Caco-2 (cell line): ENCODE measurements at regions of chr7 and their contacts with region 1.

Region 1: DNA sequence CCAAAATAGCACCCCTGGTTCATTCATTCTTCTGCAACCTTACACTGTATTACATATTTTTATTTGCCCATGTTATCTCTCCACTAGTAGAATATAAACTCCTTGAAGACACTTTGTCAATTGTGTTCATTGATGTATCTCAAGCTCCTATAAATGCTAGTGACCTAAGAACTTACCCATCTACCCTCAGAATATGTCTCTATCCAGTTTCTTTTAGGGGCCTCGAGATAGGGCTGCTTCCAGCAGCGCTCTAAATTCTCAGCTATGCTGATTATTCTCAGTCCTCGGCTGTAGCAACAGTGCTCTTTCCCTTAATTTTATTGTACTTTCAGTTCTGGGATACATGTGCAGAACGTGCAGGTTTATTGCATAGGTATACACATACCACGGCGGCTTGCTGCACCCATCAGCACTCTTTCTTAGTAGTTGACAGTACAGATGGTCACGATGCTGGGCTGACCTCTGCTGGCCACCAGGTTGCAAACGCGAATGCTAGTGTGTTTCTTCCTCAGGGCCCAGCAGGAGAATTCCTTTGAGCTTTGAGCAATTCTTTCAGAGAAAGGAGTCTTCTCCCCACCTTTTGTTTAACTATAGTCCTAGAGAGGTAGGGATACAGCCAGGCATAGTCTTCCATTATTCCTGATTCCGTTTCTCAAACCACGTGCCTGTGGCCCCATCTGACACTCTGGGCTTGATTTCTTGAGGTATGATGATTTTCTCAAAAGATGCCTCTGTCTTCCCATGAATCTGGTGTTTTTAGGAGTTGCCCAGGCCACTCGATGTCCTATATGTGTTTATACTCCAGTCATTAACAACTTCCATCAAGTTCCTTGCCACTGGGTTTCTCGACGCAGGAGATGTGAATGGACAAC is 49.1 kb upstream of the CDC14C start:
- DNase-seq: peak; percentile 59 to 66
- H3K4me3 ChIP-seq: no peak overlapping the region
- H3K4me3 Mint-ChIP-seq: no peak overlapping the region
- H3K27ac Mint-ChIP-seq: no peak overlapping the region
- H3K4me1 ChIP-seq: no peaks in the 10 kb centered on the region
- H3K4me1 Mint-ChIP-seq: no peaks in the 10 kb centered on the region
- H3K27me3 ChIP-seq: no peaks in the 10 kb centered on the region
- H3K27me3 Mint-ChIP-seq: peaks cover 4% of the 10 kb centered on the region
- CTCF ChIP-seq: peak; percentile 67 to 84

Region 2: DNA sequence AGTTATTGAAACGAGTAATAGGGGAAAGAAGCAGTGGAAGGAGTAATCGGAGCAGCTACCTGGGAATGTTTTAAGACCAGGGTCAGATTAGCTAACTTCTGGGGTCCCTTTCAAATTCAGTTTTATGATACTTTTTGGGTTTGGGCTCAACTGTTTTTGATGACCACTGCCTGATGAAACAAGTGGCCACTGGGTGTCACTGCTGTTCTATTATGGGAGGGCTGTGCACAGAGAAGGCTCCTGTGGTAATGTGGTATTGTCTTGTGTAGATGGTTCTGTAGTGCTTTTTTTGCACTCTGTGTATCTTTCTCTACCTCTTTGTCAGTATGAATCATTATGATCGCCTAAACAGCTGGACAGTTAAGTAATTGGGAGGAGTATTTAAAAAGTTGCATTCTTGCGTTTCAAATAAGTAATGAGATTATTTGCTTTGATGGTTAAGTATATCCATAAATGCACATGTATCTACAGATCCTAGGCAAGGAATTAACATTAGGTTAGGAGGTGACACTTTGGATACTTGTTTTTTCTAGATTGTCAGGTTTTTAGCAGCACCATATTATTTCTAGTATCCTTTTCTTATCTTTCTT is 575.6 kb before region 1 on chr7:
- CTCF ChIA-PET with region 1: no interaction called
- POLR2A ChIA-PET with region 1: no interaction called
- intact Hi-C with region 1: loop called (anchors 1 kb)
- DNase-seq: peak; percentile 50 to 68
- H3K4me3 ChIP-seq: no peak overlapping the region
- H3K4me3 Mint-ChIP-seq: no peak overlapping the region
- H3K27ac Mint-ChIP-seq: no peak overlapping the region
- H3K4me1 ChIP-seq: no peaks in the 10 kb centered on the region
- H3K4me1 Mint-ChIP-seq: no peaks in the 10 kb centered on the region
- H3K27me3 ChIP-seq: no peaks in the 10 kb centered on the region; the same call in 1 of the 2 replicates
- H3K27me3 Mint-ChIP-seq: peaks cover 12% of the 10 kb centered on the region
- CTCF ChIP-seq: peak; percentile 57 to 80

Region 3: DNA sequence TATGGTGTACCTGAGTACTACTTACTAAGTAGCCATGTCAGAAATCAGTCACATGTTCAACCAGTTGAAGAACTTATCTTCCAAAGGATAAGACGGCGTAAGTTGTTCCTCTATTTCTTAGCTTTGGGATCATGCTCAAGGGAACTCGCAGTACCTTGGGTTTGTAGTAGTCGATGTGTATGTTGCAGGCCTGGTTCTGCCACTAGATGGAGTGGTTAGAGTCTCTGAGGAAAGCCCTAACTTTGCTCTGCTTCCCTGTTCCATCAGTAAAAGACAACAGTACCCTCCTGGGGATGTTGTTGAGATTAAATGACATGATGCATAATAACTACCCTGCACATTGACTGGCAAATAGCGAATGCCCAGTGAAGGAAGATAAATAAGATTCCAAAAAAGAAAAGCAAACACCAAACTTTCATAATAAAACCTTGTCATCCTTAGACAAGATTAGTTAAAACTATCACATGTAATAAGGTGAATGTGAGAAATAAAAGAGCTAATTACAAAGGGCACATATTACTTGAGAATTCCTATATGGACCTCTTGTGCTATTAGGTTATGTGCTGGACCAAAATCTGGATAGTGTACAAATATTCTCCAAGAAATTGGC is 538.2 kb before region 1 on chr7:
- CTCF ChIA-PET with region 1: no interaction called
- POLR2A ChIA-PET with region 1: no interaction called
- intact Hi-C with region 1: loop called (anchors 2 kb)
- DNase-seq: peak in 1 of 2 experiments; percentile 33
- H3K4me3 ChIP-seq: no peak overlapping the region
- H3K4me3 Mint-ChIP-seq: no peak overlapping the region
- H3K27ac Mint-ChIP-seq: no peak overlapping the region
- H3K4me1 ChIP-seq: no peaks in the 10 kb centered on the region
- H3K4me1 Mint-ChIP-seq: no peaks in the 10 kb centered on the region
- H3K27me3 ChIP-seq: no peaks in the 10 kb centered on the region
- H3K27me3 Mint-ChIP-seq: peaks cover 14% of the 10 kb centered on the region
- CTCF ChIP-seq: peak; percentile 53 to 77

Region 4: GRCh38 chr7:48424731-48425130 is 450.6 kb before region 1 on chr7:
- CTCF ChIA-PET with region 1: no interaction called
- POLR2A ChIA-PET with region 1: no interaction called
- intact Hi-C with region 1: loop called (anchors 1 kb)
- DNase-seq: peak in 1 of 2 experiments; percentile 39
- H3K4me3 ChIP-seq: no peak overlapping the region
- H3K4me3 Mint-ChIP-seq: no peak overlapping the region
- H3K27ac Mint-ChIP-seq: no peak overlapping the region
- H3K4me1 ChIP-seq: no peaks in the 10 kb centered on the region
- H3K4me1 Mint-ChIP-seq: peaks cover 9% of the 10 kb centered on the region
- H3K27me3 ChIP-seq: no peaks in the 10 kb centered on the region
- H3K27me3 Mint-ChIP-seq: peaks cover 6% of the 10 kb centered on the region
- CTCF ChIP-seq: peak; percentile 60 to 71

Region 5: GRCh38 chr7:48528646-48529045 is 346.6 kb before region 1 on chr7:
- CTCF ChIA-PET with region 1: no interaction called
- POLR2A ChIA-PET with region 1: no interaction called
- intact Hi-C with region 1: loop called (anchors 1 kb)
- DNase-seq: peak; percentile 23 to 48
- H3K4me3 ChIP-seq: no peak overlapping the region
- H3K4me3 Mint-ChIP-seq: no peak overlapping the region
- H3K27ac Mint-ChIP-seq: no peak overlapping the region
- H3K4me1 ChIP-seq: no peaks in the 10 kb centered on the region
- H3K4me1 Mint-ChIP-seq: no peaks in the 10 kb centered on the region
- H3K27me3 ChIP-seq: no peaks in the 10 kb centered on the region
- H3K27me3 Mint-ChIP-seq: peaks cover 5% of the 10 kb centered on the region
- CTCF ChIP-seq: peak in 1 of 2 experiments; percentile 22

Region 6: GRCh38 chr7:48617993-48618392 is 257.3 kb before region 1 on chr7:
- CTCF ChIA-PET with region 1: no interaction called
- POLR2A ChIA-PET with region 1: no interaction called
- intact Hi-C with region 1: loop called (anchors 1 kb)
- DNase-seq: peak in 1 of 2 experiments; percentile 5
- H3K4me3 ChIP-seq: no peak overlapping the region
- H3K4me3 Mint-ChIP-seq: no peak overlapping the region
- H3K27ac Mint-ChIP-seq: no peak overlapping the region
- H3K4me1 ChIP-seq: no peaks in the 10 kb centered on the region
- H3K4me1 Mint-ChIP-seq: no peaks in the 10 kb centered on the region
- H3K27me3 ChIP-seq: no peaks in the 10 kb centered on the region; the same call in none of the 2 replicates
- H3K27me3 Mint-ChIP-seq: peaks cover 19% of the 10 kb centered on the region
- CTCF ChIP-seq: no peak

Region 7: DNA sequence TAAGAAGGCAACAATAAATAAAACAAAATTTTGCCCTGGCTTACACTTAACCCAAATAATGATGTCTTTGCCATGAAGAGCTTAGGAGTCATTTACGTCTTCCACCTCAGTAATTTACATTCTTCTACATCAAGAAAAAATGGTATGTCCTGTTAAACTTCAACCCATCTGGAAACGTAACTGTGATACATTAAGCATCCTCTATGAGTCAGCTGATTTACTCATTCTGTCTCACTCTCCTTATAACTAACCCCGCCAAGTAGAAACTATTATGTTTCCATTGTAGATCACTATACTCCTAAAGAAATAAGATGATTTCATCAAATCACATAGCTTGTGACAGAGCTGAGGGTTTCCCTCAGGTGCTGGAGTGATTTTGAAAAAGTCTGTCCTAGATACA is 379.8 kb after region 1 on chr7:
- CTCF ChIA-PET with region 1: no interaction called
- POLR2A ChIA-PET with region 1: no interaction called
- intact Hi-C with region 1: no loop called
- DNase-seq: no peak
- H3K4me3 ChIP-seq: no peak overlapping the region
- H3K4me3 Mint-ChIP-seq: no peak overlapping the region
- H3K27ac Mint-ChIP-seq: no peak overlapping the region
- H3K4me1 ChIP-seq: no peaks in the 10 kb centered on the region
- H3K4me1 Mint-ChIP-seq: no peaks in the 10 kb centered on the region
- H3K27me3 ChIP-seq: no peaks in the 10 kb centered on the region
- H3K27me3 Mint-ChIP-seq: peaks cover 2% of the 10 kb centered on the region
- CTCF ChIP-seq: no peak